ENCODE measurements at regions of chr11 and their contacts with region 1.

Region 1: DNA sequence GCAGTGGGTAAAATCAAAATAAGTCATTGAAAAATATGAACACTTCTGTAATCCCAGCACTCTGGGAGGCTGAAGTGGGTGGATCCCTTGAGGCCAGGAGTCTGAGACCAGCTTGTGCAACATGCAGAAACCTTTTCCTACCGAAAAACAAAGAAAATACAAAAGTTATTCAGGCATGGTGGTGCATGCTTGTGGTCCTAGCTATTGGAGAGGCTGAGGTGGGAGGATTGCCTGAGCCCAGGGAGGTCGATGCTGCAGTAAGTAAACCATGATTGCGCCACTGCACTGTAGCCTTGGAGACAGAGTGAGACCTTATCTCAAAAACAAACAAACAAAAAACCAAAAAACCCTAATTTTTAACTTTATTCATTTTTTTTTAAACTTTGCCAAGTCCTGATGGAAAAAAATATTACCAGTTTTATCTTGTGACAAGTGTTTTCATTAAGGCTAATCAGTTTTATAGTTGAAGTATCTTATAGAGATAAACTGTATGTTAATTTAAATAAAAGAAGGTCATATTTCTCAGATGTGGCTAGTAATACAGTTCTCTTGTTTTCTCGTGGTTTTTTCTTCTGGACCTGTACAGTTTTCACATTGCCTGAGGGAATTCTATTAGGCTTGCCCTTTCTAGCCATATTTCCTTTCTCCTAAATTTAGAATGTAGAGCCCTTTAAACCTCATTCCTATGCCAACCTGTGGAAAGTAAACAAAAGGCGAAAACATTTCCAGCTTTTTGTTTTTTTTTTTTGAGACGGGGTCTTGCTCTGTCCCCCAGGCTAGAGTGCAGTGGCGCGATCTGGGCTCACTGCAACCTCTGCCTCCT is 9.4 kb downstream of the HIPK3 start:
- DNase-seq: no peak
- ATAC-seq: no peak
- H3K4me3 ChIP-seq: no peak overlapping the region
- H3K4me3 Mint-ChIP-seq: no peak overlapping the region
- H3K27ac ChIP-seq: no peak overlapping the region
- H3K27ac Mint-ChIP-seq: no peak overlapping the region
- H3K4me1 ChIP-seq: peaks cover 0 to 21% of the 10 kb centered on the region in 2 experiments
- H3K4me1 Mint-ChIP-seq: peaks cover 38 to 52% (median 47%) of the 10 kb centered on the region in 3 donors
- H3K27me3 ChIP-seq: no peaks in the 10 kb centered on the region
- H3K27me3 Mint-ChIP-seq: no peaks in the 10 kb centered on the region

Region 2: DNA sequence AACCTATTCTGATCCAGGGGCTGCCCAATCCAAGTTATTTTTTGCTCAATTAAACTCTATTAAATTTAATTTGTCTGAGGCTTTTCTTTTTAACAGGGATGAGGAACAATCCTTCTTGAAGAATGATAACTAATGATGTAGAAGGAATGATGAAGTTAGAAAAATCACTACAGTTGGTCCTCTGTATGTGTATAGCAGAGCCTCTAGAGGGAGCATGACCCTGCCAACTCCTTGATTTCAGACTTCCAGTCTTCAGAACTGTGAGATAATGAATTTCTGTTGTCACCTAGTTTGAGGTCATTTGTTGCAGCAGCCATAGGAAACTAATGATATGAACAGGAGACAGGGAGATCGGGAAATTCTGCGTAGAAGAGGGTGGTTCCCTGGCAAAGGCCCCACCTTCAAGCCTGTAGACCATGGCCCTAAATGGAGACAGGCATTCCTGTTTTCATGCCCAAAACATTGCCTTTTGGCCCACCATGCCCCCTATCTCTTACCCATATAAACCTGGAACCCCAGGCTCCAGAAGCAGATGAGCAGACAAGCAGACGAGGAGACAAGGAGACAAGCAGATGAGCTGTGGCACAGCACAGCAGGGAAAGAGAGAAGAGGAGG is 381.7 kb before region 1 on chr11:
- CTCF ChIA-PET with region 1: interaction called in 1 of 2 experiments, 10 read pairs
- POLR2A ChIA-PET with region 1: no interaction called
- DNase-seq: peak in 1 of 35 experiments; percentile 25
- ATAC-seq: peak in 2 of 4 experiments; percentile 56 to 58
- H3K4me3 ChIP-seq: no peak overlapping the region
- H3K4me3 Mint-ChIP-seq: no peak overlapping the region
- H3K27ac ChIP-seq: no peak overlapping the region
- H3K27ac Mint-ChIP-seq: no peak overlapping the region
- H3K4me1 ChIP-seq: no peaks in the 10 kb centered on the region
- H3K4me1 Mint-ChIP-seq: no peaks in the 10 kb centered on the region
- H3K27me3 ChIP-seq: peaks cover 0 to 3% of the 10 kb centered on the region in 2 experiments
- H3K27me3 Mint-ChIP-seq: no peaks in the 10 kb centered on the region

Region 3: DNA sequence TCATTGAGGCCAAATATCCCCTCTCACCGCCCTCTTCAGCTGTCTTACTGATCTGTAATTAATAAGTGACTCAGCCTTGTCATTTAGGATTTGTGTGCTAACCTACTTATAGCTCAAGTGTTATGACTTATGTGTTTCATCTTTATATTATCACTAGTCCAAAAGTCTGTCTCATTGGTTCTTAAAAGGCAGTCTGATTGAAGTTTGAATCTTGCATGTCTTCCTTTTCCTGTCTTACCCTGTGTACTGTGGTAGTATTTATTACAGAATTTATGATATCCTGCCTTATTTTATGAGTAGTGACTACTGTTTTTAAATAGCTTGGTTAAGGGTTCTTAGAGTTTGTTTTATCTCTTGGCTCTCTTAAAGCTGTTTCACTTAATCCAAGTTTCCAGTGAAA is 244.7 kb before region 1 on chr11:
- CTCF ChIA-PET with region 1: no interaction called
- POLR2A ChIA-PET with region 1: no interaction called
- DNase-seq: no peak
- ATAC-seq: peak; percentile 34 to 68 (median 64)
- H3K4me3 ChIP-seq: no peak overlapping the region
- H3K4me3 Mint-ChIP-seq: no peak overlapping the region
- H3K27ac ChIP-seq: no peak overlapping the region
- H3K27ac Mint-ChIP-seq: peak overlapping the region in 1 of 2 donors; percentile 81
- H3K4me1 ChIP-seq: peaks cover 0 to 5% of the 10 kb centered on the region in 2 experiments
- H3K4me1 Mint-ChIP-seq: peaks cover 17 to 22% (median 21%) of the 10 kb centered on the region in 3 donors
- H3K27me3 ChIP-seq: peaks cover 0 to 3% of the 10 kb centered on the region in 2 experiments
- H3K27me3 Mint-ChIP-seq: peaks cover 0 to 20% of the 10 kb centered on the region in 2 donors

Region 4: GRCh38 chr11:33413301-33413700 is 146.7 kb after region 1 on chr11:
- CTCF ChIA-PET with region 1: no interaction called
- POLR2A ChIA-PET with region 1: no interaction called
- DNase-seq: no peak
- ATAC-seq: no peak
- H3K4me3 ChIP-seq: no peak overlapping the region
- H3K4me3 Mint-ChIP-seq: no peak overlapping the region
- H3K27ac ChIP-seq: no peak overlapping the region
- H3K27ac Mint-ChIP-seq: no peak overlapping the region
- H3K4me1 ChIP-seq: no peaks in the 10 kb centered on the region
- H3K4me1 Mint-ChIP-seq: no peaks in the 10 kb centered on the region
- H3K27me3 ChIP-seq: peaks cover 4 to 10% of the 10 kb centered on the region in 2 experiments
- H3K27me3 Mint-ChIP-seq: peaks cover 20 to 23% of the 10 kb centered on the region in 2 donors